ENCODE measurements at regions of chr6 and their contacts with region 1.

Region 1: GRCh38 chr6:2791124-2791974 is 26.2 kb downstream of the WRNIP1 start:
- DNase-seq: peak; percentile 79
- ATAC-seq: peak; percentile 77
- H3K4me3 Mint-ChIP-seq: no peak overlapping the region
- H3K27ac Mint-ChIP-seq: peak overlapping the region; percentile 80
- H3K4me1 Mint-ChIP-seq: peaks cover 36% of the 10 kb centered on the region
- H3K27me3 Mint-ChIP-seq: no peaks in the 10 kb centered on the region
- CTCF ChIP-seq: peak; percentile 83

Region 2: GRCh38 chr6:2725999-2726567 is 65.3 kb before region 1 on chr6:
- CTCF ChIA-PET with region 1: no interaction called
- POLR2A ChIA-PET with region 1: no interaction called
- intact Hi-C with region 1: no loop called
- DNase-seq: no peak
- ATAC-seq: no peak
- H3K4me3 Mint-ChIP-seq: no peak overlapping the region
- H3K27ac Mint-ChIP-seq: no peak overlapping the region
- H3K4me1 Mint-ChIP-seq: no peaks in the 10 kb centered on the region
- H3K27me3 Mint-ChIP-seq: no peaks in the 10 kb centered on the region
- CTCF ChIP-seq: no peak

Region 3: DNA sequence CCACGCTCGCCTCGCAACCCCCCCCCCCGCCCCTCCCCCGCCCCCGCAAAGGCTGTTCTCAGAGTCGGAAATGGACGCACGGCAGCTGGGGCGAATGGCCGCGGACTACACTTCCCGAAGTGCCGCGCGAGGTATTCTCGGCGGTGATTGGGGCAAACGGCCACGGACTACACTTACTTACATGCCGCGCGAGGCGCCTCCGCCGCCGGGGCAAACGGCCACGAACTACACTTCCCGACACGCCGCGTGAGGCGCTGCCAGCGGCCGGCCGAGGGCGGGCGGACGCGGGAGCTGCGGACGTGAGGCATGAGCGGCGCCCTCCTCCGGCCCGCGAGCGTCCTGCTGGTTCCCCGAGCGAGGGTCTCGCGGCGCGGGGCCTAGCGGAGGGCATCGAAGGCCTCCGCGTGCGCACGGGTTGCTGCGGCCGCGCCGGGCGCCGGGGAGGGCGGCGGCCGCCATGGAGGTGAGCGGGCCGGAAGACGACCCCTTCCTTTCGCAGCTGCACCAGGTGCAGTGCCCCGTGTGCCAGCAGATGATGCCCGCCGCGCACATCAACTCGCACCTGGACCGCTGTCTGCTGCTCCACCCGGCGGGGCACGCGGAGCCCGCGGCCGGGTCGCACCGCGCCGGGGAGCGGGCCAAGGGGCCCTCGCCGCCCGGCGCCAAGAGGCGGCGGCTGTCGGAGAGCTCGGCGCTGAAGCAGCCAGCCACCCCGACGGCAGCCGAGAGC is 26.0 kb before region 1 on chr6 and contains the start of gene WRNIP1:
- CTCF ChIA-PET with region 1: interaction called, 17 read pairs
- POLR2A ChIA-PET with region 1: interaction called, 3 read pairs
- intact Hi-C with region 1: no loop called
- DNase-seq: peak; percentile 98
- ATAC-seq: peak; percentile 89
- H3K4me3 Mint-ChIP-seq: peak within 1 kb of the TSS; percentile 80
- H3K27ac Mint-ChIP-seq: peak within 1 kb of the TSS; percentile 99
- H3K4me1 Mint-ChIP-seq: peaks cover 40% of the 10 kb centered on the region
- H3K27me3 Mint-ChIP-seq: no peaks in the 10 kb centered on the region
- CTCF ChIP-seq: peak; percentile 54
- total RNA-seq, gene WRNIP1: 36.1 to 36.6 TPM

Region 4: GRCh38 chr6:2823104-2823850 is 31.9 kb after region 1 on chr6:
- CTCF ChIA-PET with region 1: interaction called, 10 read pairs
- POLR2A ChIA-PET with region 1: interaction called, 4 read pairs
- intact Hi-C with region 1: no loop called
- DNase-seq: no peak
- ATAC-seq: no peak
- H3K4me3 Mint-ChIP-seq: no peak overlapping the region
- H3K27ac Mint-ChIP-seq: no peak overlapping the region
- H3K4me1 Mint-ChIP-seq: peaks cover 13% of the 10 kb centered on the region
- H3K27me3 Mint-ChIP-seq: no peaks in the 10 kb centered on the region
- CTCF ChIP-seq: no peak

Region 5: GRCh38 chr6:2911171-2911570 is 119.8 kb after region 1 on chr6:
- CTCF ChIA-PET with region 1: interaction called, 11 read pairs
- POLR2A ChIA-PET with region 1: no interaction called
- intact Hi-C with region 1: loop called (anchors 5 kb)
- DNase-seq: no peak
- ATAC-seq: no peak
- H3K4me3 Mint-ChIP-seq: no peak overlapping the region
- H3K27ac Mint-ChIP-seq: no peak overlapping the region
- H3K4me1 Mint-ChIP-seq: peaks cover 47% of the 10 kb centered on the region
- H3K27me3 Mint-ChIP-seq: no peaks in the 10 kb centered on the region
- CTCF ChIP-seq: no peak

Region 6: DNA sequence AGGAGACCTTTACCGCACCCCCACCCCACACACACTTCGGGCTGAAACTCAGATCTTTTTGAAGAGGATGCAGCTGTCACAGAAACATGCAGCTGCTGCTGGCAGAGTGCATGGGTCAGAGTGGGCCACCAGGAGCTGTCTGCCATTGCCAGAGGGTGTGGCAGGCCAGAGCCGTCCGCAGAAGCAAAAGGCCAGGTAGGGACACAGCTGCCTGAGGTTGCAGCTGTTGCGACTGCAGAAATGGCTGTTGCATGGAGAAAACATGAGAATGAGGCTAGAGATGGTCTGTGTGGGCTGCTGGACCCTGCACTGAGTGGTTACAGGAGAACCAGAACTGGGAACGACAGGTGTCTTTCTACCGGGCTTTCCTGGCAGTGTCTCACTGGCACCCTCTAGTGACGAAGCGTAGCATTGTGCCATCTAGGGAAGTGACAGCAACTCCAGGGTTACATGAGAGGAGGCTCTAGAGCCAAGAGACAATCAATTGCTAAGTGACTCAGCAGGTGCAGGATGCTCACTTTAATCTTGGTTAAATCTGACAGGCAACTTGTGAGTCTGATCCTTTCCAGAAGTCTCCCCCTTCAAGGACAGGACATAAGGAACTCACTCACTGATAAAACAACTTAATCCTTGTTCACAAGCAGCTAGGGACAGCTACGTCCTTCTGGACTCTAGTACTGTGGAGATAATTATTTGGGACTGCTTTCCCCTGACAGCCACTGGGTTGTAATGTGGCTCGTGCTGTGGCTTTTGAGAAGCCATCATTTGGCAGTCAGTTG is 140.8 kb after region 1 on chr6:
- CTCF ChIA-PET with region 1: interaction called, 84 read pairs
- POLR2A ChIA-PET with region 1: interaction called, 3 read pairs
- intact Hi-C with region 1: no loop called
- DNase-seq: peak; percentile 94
- ATAC-seq: peak; percentile 90
- H3K4me3 Mint-ChIP-seq: no peak overlapping the region
- H3K27ac Mint-ChIP-seq: peak overlapping the region; percentile 67
- H3K4me1 Mint-ChIP-seq: peaks cover 27% of the 10 kb centered on the region
- H3K27me3 Mint-ChIP-seq: no peaks in the 10 kb centered on the region
- CTCF ChIP-seq: peak; percentile 96

Region 7: DNA sequence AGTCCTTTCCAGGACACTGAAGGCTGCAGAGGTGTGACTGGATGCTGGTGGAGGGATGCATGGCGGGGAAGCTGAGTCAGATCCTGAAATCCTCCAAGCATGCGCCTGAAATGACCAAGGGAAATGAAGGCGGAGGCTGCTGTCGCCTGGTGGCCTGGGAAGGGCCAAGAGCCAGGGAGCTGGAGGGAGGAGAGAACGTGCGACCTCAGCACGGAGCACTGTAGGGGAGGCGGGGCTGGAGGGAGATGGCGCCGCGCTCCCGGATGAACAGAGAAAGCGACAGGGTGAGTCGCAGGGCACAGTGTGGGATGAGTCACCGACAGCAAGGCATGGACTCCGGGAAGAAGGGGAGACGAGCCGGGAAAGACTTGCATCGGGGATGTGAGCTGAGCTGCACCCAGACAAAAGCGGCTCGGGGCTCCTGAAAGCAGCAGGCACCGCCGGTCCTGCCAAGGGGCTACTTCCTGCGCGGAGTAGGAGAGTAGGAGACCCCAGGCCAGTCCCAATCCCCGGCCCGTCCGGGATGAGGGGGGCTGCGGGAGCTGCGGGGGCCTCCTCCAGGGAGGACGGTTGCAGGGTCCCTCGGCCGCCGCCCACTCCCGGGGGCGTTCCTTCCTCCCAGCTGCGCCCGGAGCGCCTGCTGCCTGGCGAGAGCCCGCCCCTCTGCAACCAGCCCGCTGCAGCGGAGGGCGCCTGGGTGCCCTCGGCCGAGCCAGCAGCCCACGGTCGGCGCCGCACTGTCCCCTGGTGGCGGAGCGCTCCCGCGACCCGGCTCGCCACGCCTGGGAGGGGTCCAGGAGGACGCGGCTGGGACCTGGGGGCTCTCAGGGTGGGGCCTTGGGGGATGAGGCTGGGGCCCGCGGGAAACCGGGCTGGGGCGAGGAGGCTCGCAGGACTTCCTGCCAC is 197.3 kb after region 1 on chr6:
- CTCF ChIA-PET with region 1: interaction called, 27 read pairs
- POLR2A ChIA-PET with region 1: interaction called, 3 read pairs
- intact Hi-C with region 1: no loop called
- DNase-seq: peak; percentile 83
- ATAC-seq: peak; percentile 82
- H3K4me3 Mint-ChIP-seq: peak overlapping the region; percentile 95
- H3K27ac Mint-ChIP-seq: peak overlapping the region; percentile 100
- H3K4me1 Mint-ChIP-seq: peaks cover 19% of the 10 kb centered on the region
- H3K27me3 Mint-ChIP-seq: no peaks in the 10 kb centered on the region
- CTCF ChIP-seq: peak; percentile 71

Measured in activated CD8-positive, alpha-beta T cell treated with anti-CD3 and anti-CD28 coated beads for 36 hours (primary cell).